ENCODE measurements at regions of chr14 and their contacts with region 1.

Region 1: DNA sequence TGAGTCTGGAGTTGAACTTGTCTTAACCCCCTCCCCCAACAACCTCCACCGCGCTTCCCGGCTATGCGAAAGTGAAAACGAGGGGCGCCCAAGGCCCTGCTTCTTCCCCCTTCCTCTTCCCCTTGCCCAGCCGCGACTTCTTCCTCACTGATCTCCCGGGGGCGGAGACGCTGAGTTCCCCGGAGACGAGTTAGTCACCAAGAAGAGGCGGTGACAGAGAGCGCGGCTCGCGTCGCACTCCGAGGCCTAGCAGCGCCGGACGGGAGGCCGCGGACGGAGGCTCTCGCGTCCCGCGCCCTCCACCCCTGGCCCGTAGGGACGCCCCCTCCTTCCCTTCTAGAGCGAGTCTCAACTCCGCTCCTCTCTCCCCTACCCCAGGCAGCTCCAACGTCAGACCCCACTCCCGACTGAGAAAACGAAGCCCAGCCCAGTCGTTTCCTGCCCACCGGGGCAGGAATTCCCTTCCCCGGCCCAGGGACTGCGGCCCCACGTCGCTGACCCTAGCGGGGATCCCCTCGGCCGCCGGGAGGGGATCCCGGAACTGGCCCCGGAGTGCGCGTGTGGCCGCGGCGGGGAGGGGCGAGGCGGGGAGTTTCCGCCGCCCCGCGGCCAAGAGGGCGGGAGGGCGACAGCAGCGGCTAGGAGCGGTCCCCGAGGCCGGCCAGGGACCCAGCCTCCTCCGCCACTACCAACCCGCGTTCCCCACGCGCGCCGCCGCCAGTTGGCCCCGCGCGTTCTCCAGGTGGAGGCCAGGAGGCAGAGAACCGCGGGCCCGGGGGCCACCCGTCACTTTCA is 1.4 kb downstream of the BAZ1A start:
- DNase-seq: peak; percentile 95
- H3K4me3 Mint-ChIP-seq: peak overlapping the region; percentile 89
- H3K27ac Mint-ChIP-seq: peak overlapping the region; percentile 98
- H3K4me1 Mint-ChIP-seq: peaks cover 35% of the 10 kb centered on the region
- H3K27me3 Mint-ChIP-seq: no peaks in the 10 kb centered on the region

Region 2: DNA sequence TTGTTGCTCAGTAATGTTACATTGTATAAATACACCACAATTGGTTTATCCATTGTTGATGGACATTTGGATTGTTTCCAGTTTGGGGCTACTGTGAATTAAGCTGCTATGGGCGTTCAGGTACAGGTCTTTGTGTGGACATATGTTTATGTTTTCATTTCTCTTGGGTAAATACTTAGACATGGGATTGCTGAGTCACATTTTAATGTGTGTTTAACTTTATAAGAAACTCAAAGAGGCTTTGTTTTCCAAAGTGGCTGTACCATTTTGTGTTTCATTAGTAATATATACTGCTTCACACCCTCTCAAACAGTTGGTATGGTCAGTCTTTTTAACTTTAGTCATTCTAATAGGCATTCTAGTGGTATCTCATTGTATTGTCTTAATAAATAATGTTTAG is 636.7 kb before region 1 on chr14:
- CTCF ChIA-PET with region 1: no interaction called
- intact Hi-C with region 1: no loop called
- DNase-seq: no peak
- H3K4me3 Mint-ChIP-seq: no peak overlapping the region
- H3K27ac Mint-ChIP-seq: no peak overlapping the region
- H3K4me1 Mint-ChIP-seq: no peaks in the 10 kb centered on the region
- H3K27me3 Mint-ChIP-seq: peaks cover 4% of the 10 kb centered on the region

Region 3: DNA sequence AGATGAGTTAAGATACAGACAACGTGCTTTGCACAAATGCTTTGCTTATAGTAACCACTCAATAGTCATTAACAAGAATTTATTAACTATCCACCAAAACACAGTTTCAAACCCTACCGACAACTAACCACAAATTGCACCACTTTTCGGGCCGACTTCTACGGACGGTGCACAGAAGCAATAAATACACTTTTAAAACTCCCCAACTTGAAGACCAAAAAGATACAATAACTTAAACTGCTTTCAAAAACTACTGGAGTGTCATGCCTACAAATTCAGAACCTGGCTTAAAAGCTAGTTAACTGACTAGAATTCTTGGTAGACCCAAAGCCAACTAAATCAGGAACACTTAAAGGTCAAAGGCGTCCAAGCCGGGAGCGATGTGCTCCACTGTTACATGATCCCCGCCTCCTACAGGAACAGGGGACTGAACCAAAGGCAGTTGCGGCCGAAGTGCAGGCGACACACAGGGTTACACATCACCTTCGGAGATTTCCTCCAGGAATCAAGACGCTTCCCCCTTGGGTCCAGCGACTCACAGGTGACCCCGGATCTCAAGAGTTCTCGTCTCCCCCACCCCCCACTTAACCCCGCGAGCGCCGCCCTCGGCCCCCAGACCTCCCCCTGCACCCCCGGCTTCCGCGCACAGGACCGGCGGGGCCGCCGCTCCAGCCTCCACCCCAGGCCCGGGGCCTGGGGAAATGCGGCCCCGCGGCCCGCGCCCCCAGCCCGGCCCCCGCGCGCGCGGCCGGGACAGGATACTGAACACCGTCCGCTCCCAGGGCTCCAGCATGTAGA is 412.3 kb before region 1 on chr14:
- CTCF ChIA-PET with region 1: no interaction called
- intact Hi-C with region 1: loop called (anchors 2 kb)
- DNase-seq: peak; percentile 41
- H3K4me3 Mint-ChIP-seq: peak overlapping the region; percentile 87
- H3K27ac Mint-ChIP-seq: peak overlapping the region; percentile 65
- H3K4me1 Mint-ChIP-seq: peaks cover 16% of the 10 kb centered on the region
- H3K27me3 Mint-ChIP-seq: no peaks in the 10 kb centered on the region

Region 4: GRCh38 chr14:34671716-34672115 is 202.1 kb before region 1 on chr14:
- CTCF ChIA-PET with region 1: interaction called, 3 read pairs
- intact Hi-C with region 1: loop called (anchors 1 kb)
- DNase-seq: no peak
- H3K4me3 Mint-ChIP-seq: no peak overlapping the region
- H3K27ac Mint-ChIP-seq: no peak overlapping the region
- H3K4me1 Mint-ChIP-seq: no peaks in the 10 kb centered on the region
- H3K27me3 Mint-ChIP-seq: no peaks in the 10 kb centered on the region

Region 5: GRCh38 chr14:34810028-34810427 is 63.8 kb before region 1 on chr14:
- CTCF ChIA-PET with region 1: no interaction called
- intact Hi-C with region 1: loop called (anchors 2 kb)
- DNase-seq: no peak
- H3K4me3 Mint-ChIP-seq: no peak overlapping the region
- H3K27ac Mint-ChIP-seq: no peak overlapping the region
- H3K4me1 Mint-ChIP-seq: peaks cover 16% of the 10 kb centered on the region
- H3K27me3 Mint-ChIP-seq: no peaks in the 10 kb centered on the region

Region 6: DNA sequence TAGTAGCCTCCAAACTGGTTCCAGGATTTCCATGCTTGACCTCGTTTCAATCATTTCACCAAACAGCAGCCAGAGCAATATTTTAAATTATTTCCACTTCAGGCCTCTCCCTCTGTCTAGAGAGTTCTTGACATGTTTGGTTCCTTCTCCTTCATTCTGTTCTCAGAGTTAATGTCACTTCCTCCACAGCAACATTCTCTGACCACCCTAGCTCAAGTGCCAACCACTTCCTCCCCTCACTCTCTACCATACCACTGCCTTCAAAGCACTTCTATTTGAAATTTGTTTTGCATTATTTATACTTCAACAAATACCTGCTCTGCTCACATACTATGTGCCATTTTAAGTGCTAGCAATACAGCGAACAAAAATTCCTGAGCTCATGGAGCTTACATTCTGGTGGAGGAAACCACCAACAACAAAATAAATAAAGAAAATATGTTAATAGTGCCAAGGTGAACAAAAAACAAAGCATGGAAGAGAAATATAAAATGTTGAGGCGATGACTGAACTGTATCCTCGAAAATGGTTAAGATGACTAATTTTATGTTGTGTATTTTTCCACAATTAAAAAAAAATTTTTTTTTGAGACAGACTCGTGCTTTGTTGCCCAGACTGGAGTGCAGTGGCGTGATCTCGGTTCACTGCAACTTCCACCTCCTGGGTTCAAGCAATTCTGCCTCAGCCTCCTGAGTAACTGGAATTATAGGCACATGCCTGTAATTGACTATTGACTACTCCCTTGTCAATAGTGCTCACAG is 15.9 kb before region 1 on chr14:
- CTCF ChIA-PET with region 1: no interaction called
- intact Hi-C with region 1: loop called (anchors 2 kb)
- DNase-seq: no peak
- H3K4me3 Mint-ChIP-seq: no peak overlapping the region
- H3K27ac Mint-ChIP-seq: peak overlapping the region; percentile 40
- H3K4me1 Mint-ChIP-seq: peaks cover 27% of the 10 kb centered on the region
- H3K27me3 Mint-ChIP-seq: no peaks in the 10 kb centered on the region

Region 7: GRCh38 chr14:35285168-35286002 is 411.6 kb after region 1 on chr14:
- CTCF ChIA-PET with region 1: no interaction called
- intact Hi-C with region 1: loop called (anchors 1 kb)
- DNase-seq: peak; percentile 47
- H3K4me3 Mint-ChIP-seq: peak overlapping the region; percentile 35
- H3K27ac Mint-ChIP-seq: peak overlapping the region; percentile 96
- H3K4me1 Mint-ChIP-seq: peaks cover 55% of the 10 kb centered on the region
- H3K27me3 Mint-ChIP-seq: no peaks in the 10 kb centered on the region